CD8-positive, alpha-beta T cell (primary cell): ENCODE measurements at regions of chr12 and their contacts with region 1.

Region 1: GRCh38 chr12:7219599-7220243 is 30.2 kb downstream of the PEX5 start:
- DNase-seq: peak; percentile 47 to 82 (median 76)
- ATAC-seq: peak; percentile 70
- H3K4me3 ChIP-seq: no peak overlapping the region
- H3K4me3 Mint-ChIP-seq: no peak overlapping the region
- H3K27ac ChIP-seq: no peak overlapping the region
- H3K27ac Mint-ChIP-seq: no peak overlapping the region
- H3K4me1 ChIP-seq: no peaks in the 10 kb centered on the region
- H3K4me1 Mint-ChIP-seq: no peaks in the 10 kb centered on the region
- H3K27me3 ChIP-seq: no peaks in the 10 kb centered on the region
- H3K27me3 Mint-ChIP-seq: no peaks in the 10 kb centered on the region
- CTCF ChIP-seq: peak; percentile 84

Region 2: DNA sequence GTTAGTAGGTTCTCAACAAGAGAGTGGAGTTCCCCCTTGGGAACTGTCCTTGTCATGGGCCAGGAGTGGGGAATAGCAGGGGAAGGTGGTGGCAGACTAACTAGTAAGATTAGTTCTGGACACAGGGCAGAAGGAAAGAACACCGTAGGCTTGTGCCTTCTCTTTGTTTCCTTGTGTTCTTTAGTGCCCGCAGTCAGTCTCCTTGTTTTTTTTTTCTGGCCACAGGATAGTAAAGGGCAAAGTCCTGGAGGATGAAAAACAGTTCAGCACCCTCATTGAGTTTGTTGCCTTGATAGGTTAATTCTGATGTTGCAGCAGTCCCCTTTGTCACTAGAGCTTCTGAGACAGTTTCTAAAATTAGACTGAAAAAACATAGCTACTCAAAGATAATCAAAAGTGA is 21.9 kb before region 1 on chr12:
- CTCF ChIA-PET with region 1: no interaction called
- POLR2A ChIA-PET with region 1: no interaction called
- intact Hi-C with region 1: no loop called
- DNase-seq: no peak
- ATAC-seq: no peak
- H3K4me3 ChIP-seq: no peak overlapping the region
- H3K4me3 Mint-ChIP-seq: no peak overlapping the region
- H3K27ac ChIP-seq: no peak overlapping the region
- H3K27ac Mint-ChIP-seq: no peak overlapping the region
- H3K4me1 ChIP-seq: no peaks in the 10 kb centered on the region
- H3K4me1 Mint-ChIP-seq: peaks cover 23% of the 10 kb centered on the region
- H3K27me3 ChIP-seq: no peaks in the 10 kb centered on the region
- H3K27me3 Mint-ChIP-seq: no peaks in the 10 kb centered on the region
- CTCF ChIP-seq: no peak

Region 3: GRCh38 chr12:7387289-7387688 is 167.6 kb after region 1 on chr12:
- CTCF ChIA-PET with region 1: no interaction called
- POLR2A ChIA-PET with region 1: no interaction called
- intact Hi-C with region 1: loop called in 1 of 2 experiments (anchors 5 kb)
- DNase-seq: peak in 2 of 9 experiments; percentile 3 to 28
- ATAC-seq: no peak
- H3K4me3 ChIP-seq: no peak overlapping the region
- H3K4me3 Mint-ChIP-seq: no peak overlapping the region
- H3K27ac ChIP-seq: no peak overlapping the region
- H3K27ac Mint-ChIP-seq: no peak overlapping the region
- H3K4me1 ChIP-seq: no peaks in the 10 kb centered on the region
- H3K4me1 Mint-ChIP-seq: no peaks in the 10 kb centered on the region
- H3K27me3 ChIP-seq: no peaks in the 10 kb centered on the region
- H3K27me3 Mint-ChIP-seq: peaks cover 16% of the 10 kb centered on the region
- CTCF ChIP-seq: no peak

Region 4: GRCh38 chr12:7460375-7461259 is 240.9 kb after region 1 on chr12:
- CTCF ChIA-PET with region 1: interaction called, 23 read pairs
- POLR2A ChIA-PET with region 1: no interaction called
- intact Hi-C with region 1: loop called in 1 of 2 experiments (anchors 1 kb)
- DNase-seq: peak; percentile 13 to 73 (median 58)
- ATAC-seq: peak; percentile 57
- H3K4me3 ChIP-seq: no peak overlapping the region
- H3K4me3 Mint-ChIP-seq: no peak overlapping the region
- H3K27ac ChIP-seq: no peak overlapping the region
- H3K27ac Mint-ChIP-seq: no peak overlapping the region
- H3K4me1 ChIP-seq: no peaks in the 10 kb centered on the region
- H3K4me1 Mint-ChIP-seq: no peaks in the 10 kb centered on the region
- H3K27me3 ChIP-seq: no peaks in the 10 kb centered on the region
- H3K27me3 Mint-ChIP-seq: peaks cover 7% of the 10 kb centered on the region
- CTCF ChIP-seq: peak; percentile 41